Common myeloid progenitor, CD34-positive (primary cell): ENCODE measurements at regions of chr10 and their contacts with region 1.

Region 1: GRCh38 chr10:110927461-110927860 is 8.1 kb downstream of the SHOC2 start:
- DNase-seq: no peak
- H3K4me3 ChIP-seq: no peak overlapping the region
- H3K27ac ChIP-seq: no peak overlapping the region
- H3K4me1 ChIP-seq: peaks cover 0 to 15% (median 8%) of the 10 kb centered on the region in 4 experiments
- H3K27me3 ChIP-seq: no peaks in the 10 kb centered on the region

Region 2: DNA sequence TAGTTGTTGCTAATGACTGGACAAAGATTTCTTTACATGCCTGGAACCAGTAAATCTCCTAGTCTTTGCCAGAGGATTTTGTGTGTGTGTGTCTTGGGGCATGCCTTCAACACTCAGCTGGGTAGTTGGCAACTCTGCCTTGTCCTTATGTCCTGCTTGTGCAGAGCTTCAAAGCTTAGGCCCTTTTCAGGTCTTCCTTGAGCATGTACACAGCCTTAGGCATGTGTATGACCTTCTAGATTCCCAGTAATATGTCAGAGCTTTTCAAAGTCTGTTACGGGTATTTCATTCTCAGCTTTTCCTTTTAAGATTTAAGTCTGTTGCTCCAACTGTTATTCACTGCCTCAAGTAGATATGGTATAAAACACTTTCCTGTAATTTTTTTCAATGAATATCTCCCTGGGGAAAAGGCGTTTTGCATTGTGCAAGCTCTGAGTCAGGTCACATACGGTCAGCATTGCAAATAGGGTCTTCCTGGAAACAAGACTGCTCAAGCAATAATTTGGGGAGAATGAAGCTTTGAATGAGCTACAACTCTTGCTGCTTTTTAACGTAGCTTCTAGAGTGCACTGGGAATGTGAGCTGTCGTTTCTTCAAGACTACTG is 17.4 kb after region 1 on chr10:
- CTCF ChIA-PET with region 1: interaction called, 13 read pairs
- POLR2A ChIA-PET with region 1: interaction called, 7 read pairs
- DNase-seq: no peak
- H3K4me3 ChIP-seq: no peak overlapping the region
- H3K27ac ChIP-seq: no peak overlapping the region
- H3K4me1 ChIP-seq: no peaks in the 10 kb centered on the region
- H3K27me3 ChIP-seq: no peaks in the 10 kb centered on the region